ENCODE measurements at regions of chr20 and their contacts with region 1.

Region 1: GRCh38 chr20:25178563-25179438 is 16.7 kb upstream of the ENTPD6 start:
- DNase-seq: peak; percentile 38
- H3K4me3 Mint-ChIP-seq: no peak overlapping the region
- H3K27ac Mint-ChIP-seq: no peak overlapping the region
- H3K4me1 Mint-ChIP-seq: no peaks in the 10 kb centered on the region
- H3K27me3 Mint-ChIP-seq: peaks cover 7% of the 10 kb centered on the region

Region 2: DNA sequence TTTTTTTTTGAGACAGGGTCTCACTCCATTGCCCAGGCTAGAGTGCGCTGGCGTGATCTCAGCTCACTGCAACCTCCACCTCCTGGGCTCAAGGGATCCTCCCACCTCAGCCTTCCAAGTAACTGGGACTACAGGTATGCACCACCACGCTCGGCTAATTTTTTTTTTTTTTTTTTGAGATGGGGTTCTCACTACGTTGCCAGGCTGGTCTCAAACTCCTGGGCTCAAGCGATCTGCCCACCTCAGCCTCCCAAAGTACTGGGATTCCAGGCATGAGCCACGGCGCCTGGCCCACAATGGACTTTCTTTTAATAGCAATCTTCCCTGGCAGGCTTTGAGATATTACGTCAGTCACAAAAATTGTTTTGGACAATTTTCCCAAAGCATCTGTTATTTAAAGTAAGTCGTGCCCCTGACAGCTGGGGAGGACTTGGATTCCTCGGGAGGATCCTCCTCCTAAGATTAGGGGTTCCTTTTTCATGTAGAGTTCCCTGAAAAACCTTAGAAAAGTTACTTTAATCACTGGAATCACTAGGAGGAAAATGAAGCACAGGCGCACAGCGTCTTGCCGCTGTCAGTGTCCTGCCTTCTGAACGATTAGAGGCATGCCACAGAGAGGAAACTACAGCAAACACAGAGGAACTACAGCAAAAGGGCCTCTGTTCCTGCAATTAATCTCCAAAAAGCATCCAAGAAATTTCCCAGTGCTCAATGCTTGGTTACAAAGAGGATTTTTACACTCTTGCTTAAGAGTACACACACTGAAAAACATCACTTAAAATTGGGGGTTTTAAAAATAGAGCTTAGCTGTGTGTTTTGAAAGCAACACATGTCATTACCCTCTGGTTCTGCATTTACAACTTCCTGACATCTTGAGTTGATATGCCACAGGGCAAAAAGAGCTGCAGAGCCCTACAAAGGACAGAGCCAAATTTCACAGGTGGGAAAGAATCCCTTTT is 125.4 kb before region 1 on chr20:
- CTCF ChIA-PET with region 1: no interaction called
- intact Hi-C with region 1: no loop called
- DNase-seq: no peak
- H3K4me3 Mint-ChIP-seq: no peak overlapping the region
- H3K27ac Mint-ChIP-seq: no peak overlapping the region
- H3K4me1 Mint-ChIP-seq: peaks cover 55% of the 10 kb centered on the region
- H3K27me3 Mint-ChIP-seq: no peaks in the 10 kb centered on the region

Region 3: GRCh38 chr20:25065625-25066338 is 113.0 kb before region 1 on chr20:
- CTCF ChIA-PET with region 1: interaction called, 10 read pairs
- intact Hi-C with region 1: loop called (anchors 1 kb)
- DNase-seq: peak; percentile 76
- H3K4me3 Mint-ChIP-seq: no peak overlapping the region
- H3K27ac Mint-ChIP-seq: no peak overlapping the region
- H3K4me1 Mint-ChIP-seq: no peaks in the 10 kb centered on the region
- H3K27me3 Mint-ChIP-seq: peaks cover 14% of the 10 kb centered on the region

Region 4: GRCh38 chr20:25077610-25078169 is 101.1 kb before region 1 on chr20:
- CTCF ChIA-PET with region 1: interaction called, 3 read pairs
- intact Hi-C with region 1: loop called (anchors 1 kb)
- DNase-seq: peak; percentile 23
- H3K4me3 Mint-ChIP-seq: no peak overlapping the region
- H3K27ac Mint-ChIP-seq: no peak overlapping the region
- H3K4me1 Mint-ChIP-seq: peaks cover 17% of the 10 kb centered on the region
- H3K27me3 Mint-ChIP-seq: peaks cover 56% of the 10 kb centered on the region

Measured in activated naive CD4-positive, alpha-beta T cell treated with anti-CD3 and anti-CD28 coated beads for 36 hours (primary cell).